ENCODE measurements at regions of chr15 and their contacts with region 1.

Region 1: DNA sequence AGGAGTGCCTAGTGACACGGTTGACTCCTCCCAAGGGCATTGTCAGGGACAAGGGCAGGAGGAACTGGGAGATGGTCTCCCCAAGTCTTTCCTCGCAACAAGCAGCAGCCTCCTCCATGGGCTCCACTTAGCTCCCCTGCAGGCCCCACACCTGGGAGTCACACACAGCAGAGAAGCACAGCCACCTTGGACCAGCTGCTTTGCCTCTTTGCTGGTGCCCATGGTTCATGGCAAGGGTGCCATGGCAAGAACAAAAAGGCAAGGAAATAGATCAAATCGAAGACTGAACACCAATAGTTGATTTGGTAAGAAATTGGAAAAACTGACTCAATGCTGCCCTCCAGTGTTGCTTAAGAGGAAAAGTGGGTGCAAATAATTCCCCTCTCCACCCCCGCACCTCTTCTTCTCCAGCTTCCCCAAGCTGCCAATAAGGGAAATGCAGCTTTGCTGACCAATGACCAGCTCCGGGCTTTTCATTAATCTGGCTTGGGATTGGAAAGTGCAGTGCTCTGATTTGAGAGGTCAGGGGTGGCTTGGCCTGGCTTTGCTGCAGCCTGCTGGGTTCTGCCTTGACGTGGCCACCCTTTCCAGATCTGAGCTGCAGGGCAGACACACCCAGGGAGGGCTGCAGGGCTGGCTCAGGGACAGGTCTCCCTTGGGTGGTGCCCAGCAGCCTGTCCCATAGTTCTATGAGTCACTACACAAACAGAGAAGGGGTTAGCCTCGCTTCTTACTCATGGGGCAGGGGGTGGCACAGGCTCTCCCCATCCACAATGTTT is 162.0 kb downstream of the KLF13 start:
- DNase-seq: peak; percentile 78 to 87 (median 82)
- H3K4me3 ChIP-seq: no peak overlapping the region
- H3K4me3 Mint-ChIP-seq: peak overlapping the region in 1 of 2 donors; percentile 21
- H3K27ac ChIP-seq: no peak overlapping the region
- H3K27ac Mint-ChIP-seq: peak overlapping the region in 2 of 7 donors; percentile 18 to 22
- H3K4me1 ChIP-seq: peaks cover 10 to 19% of the 10 kb centered on the region in 2 donors
- H3K4me1 Mint-ChIP-seq: peaks cover 23% of the 10 kb centered on the region
- H3K27me3 ChIP-seq: peaks cover 3 to 35% of the 10 kb centered on the region in 2 donors
- H3K27me3 Mint-ChIP-seq: peaks cover 25 to 42% (median 33%) of the 10 kb centered on the region in 3 donors
- CTCF ChIP-seq: peak; percentile 94

Region 2: DNA sequence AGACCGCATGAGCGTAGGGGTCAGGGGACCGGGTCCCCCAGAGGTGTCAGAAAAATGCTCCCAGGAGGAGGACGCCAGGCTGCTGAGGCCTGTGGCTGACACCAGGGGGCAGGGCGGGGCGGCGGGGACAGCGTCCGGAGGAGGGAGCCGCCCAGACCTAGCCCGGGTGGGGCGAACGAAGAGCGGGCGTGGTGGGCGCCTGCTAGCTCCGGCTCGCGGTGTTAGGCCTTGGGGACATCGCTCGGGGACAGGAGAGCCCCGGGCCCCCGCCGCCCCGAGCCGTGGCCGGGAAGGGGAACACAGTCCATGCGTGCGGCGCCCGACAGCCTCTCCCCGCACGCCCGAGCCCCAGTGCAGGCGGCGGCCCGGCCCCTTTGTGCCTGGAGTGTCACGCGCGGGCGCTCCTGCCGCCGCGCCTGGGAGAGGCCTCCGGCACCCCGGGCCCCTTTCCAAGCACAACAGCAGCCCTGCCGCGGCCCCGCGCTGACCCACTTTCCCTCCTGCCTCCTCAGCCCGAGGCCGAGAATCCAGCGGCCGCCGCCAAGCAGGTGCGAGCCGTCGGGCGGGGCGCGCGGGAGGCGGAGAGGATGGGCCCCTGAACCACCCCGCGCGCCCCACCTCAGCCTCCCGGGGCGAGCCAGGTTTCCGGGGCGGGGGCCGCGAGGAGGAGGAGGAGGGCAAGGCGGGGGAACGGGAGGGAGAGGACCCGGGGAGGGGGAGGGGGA is 273.0 kb before region 1 on chr15:
- intact Hi-C with region 1: loop called in 1 of 2 experiments (anchors 5 kb)
- DNase-seq: peak; percentile 82 to 85 (median 83)
- H3K4me3 ChIP-seq: peak overlapping the region; percentile 33 to 72 (median 44)
- H3K4me3 Mint-ChIP-seq: peak overlapping the region; percentile 80 to 83
- H3K27ac ChIP-seq: peak overlapping the region; percentile 91 to 93
- H3K27ac Mint-ChIP-seq: peak overlapping the region; percentile 90 to 98 (median 96)
- H3K4me1 ChIP-seq: peaks cover 68 to 81% of the 10 kb centered on the region in 2 donors
- H3K4me1 Mint-ChIP-seq: peaks cover 80% of the 10 kb centered on the region
- H3K27me3 ChIP-seq: no peaks in the 10 kb centered on the region
- H3K27me3 Mint-ChIP-seq: peaks cover 0 to 3% (median 0%) of the 10 kb centered on the region in 3 donors
- CTCF ChIP-seq: peak; percentile 98

Region 3: DNA sequence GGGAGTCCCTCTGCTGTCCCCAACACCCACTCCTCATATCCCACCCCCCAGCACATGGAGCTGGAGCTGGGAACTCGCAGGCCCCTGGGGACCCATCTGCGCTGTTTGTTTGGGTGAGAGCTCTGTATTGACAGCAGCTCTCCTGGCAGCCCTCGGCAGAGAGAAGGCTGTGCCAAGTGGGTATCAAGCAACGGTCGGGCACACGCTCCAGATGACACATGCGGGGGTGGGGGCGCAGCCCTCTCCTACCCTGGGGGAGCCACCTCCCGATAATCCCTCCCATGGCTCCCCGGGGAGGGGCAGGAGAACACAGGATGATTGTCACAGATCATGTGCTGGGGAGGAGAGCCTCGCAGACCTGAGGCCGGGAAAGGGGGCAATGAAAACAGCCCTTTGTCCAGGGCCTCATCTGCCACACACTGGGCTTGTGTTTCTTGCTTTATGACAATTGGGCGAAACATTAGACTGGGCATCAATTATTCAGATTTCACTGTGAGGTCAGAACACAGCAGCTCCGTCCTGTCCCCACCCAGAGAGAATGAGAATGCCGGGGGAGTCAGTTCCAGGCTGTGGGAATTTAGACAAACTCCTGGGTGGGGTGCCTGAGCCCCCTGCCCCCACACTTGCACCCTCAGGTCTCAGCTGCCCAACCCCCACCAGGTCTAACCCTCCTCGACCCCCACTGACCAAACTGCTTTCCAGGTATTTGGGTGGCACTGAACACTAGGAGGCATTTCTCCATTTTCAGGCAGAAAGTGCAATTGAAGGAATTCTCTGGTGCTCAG is 208.4 kb before region 1 on chr15:
- intact Hi-C with region 1: no loop called
- DNase-seq: no peak
- H3K4me3 ChIP-seq: no peak overlapping the region
- H3K4me3 Mint-ChIP-seq: no peak overlapping the region
- H3K27ac ChIP-seq: no peak overlapping the region
- H3K27ac Mint-ChIP-seq: no peak overlapping the region
- H3K4me1 ChIP-seq: peaks cover 12 to 20% of the 10 kb centered on the region in 2 donors
- H3K4me1 Mint-ChIP-seq: peaks cover 38% of the 10 kb centered on the region
- H3K27me3 ChIP-seq: no peaks in the 10 kb centered on the region
- H3K27me3 Mint-ChIP-seq: peaks cover 2 to 3% (median 2%) of the 10 kb centered on the region in 3 donors
- CTCF ChIP-seq: no peak

Region 4: GRCh38 chr15:31365655-31366127 is 122.9 kb before region 1 on chr15:
- intact Hi-C with region 1: loop called (anchors 2 to 5 kb)
- DNase-seq: peak; percentile 76 to 78 (median 78)
- H3K4me3 ChIP-seq: peak overlapping the region in 1 of 3 experiments; percentile 53
- H3K4me3 Mint-ChIP-seq: peak overlapping the region; percentile 63 to 74
- H3K27ac ChIP-seq: peak overlapping the region; percentile 45 to 56
- H3K27ac Mint-ChIP-seq: peak overlapping the region; percentile 64 to 86 (median 81)
- H3K4me1 ChIP-seq: peaks cover 74 to 80% of the 10 kb centered on the region in 2 donors
- H3K4me1 Mint-ChIP-seq: peaks cover 93% of the 10 kb centered on the region
- H3K27me3 ChIP-seq: no peaks in the 10 kb centered on the region
- H3K27me3 Mint-ChIP-seq: peaks cover 0 to 2% (median 0%) of the 10 kb centered on the region in 3 donors
- CTCF ChIP-seq: peak; percentile 69

Region 5: DNA sequence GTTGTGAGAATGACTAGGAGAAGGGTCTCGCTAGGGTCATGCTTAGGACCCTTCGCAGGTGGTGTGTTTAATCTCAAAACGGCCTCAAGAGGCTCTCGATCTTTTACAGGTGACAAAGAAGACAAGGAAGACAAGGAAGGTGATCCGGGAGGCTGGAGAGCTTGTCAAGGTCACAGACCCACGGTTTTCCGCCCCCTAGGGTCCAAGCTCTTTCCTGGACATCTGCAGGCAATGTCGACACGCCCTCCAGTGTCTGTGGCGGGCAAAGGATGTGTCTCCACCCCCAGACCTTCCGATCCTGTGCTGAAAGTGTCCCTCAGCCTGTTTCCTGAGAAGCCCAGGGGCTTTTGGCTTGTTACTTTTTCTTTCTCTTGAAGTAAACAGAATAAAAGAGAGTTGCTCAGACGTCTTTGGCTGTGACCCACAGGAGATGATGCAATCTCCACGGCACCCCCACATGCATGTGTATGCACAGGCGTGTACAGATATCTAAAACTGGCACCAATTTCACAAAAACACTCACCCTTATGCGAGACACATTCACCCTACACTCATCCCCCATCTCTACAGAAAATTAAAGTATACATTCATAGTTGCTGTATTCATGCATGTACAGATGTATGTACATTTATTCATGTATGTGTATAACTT is 53.2 kb before region 1 on chr15:
- intact Hi-C with region 1: loop called (anchors 2 to 5 kb)
- DNase-seq: peak; percentile 80 to 89 (median 85)
- H3K4me3 ChIP-seq: peak overlapping the region; percentile 40 to 69 (median 48)
- H3K4me3 Mint-ChIP-seq: peak overlapping the region; percentile 78 to 91
- H3K27ac ChIP-seq: peak overlapping the region; percentile 81 to 98
- H3K27ac Mint-ChIP-seq: peak overlapping the region; percentile 95 to 98 (median 96)
- H3K4me1 ChIP-seq: peaks cover 50 to 53% of the 10 kb centered on the region in 2 donors
- H3K4me1 Mint-ChIP-seq: peaks cover 51% of the 10 kb centered on the region
- H3K27me3 ChIP-seq: no peaks in the 10 kb centered on the region
- H3K27me3 Mint-ChIP-seq: peaks cover 0 to 4% (median 3%) of the 10 kb centered on the region in 3 donors
- CTCF ChIP-seq: peak; percentile 79